Activated CD4-positive, alpha-beta memory T cell treated with anti-CD3 and anti-CD28 coated beads, Interleukin-2, amount 10 ng/mL, durations not matched to agents 7 days and 5 days (primary cell): ENCODE measurements at regions of chr7 and their contacts with region 1.

Region 1: DNA sequence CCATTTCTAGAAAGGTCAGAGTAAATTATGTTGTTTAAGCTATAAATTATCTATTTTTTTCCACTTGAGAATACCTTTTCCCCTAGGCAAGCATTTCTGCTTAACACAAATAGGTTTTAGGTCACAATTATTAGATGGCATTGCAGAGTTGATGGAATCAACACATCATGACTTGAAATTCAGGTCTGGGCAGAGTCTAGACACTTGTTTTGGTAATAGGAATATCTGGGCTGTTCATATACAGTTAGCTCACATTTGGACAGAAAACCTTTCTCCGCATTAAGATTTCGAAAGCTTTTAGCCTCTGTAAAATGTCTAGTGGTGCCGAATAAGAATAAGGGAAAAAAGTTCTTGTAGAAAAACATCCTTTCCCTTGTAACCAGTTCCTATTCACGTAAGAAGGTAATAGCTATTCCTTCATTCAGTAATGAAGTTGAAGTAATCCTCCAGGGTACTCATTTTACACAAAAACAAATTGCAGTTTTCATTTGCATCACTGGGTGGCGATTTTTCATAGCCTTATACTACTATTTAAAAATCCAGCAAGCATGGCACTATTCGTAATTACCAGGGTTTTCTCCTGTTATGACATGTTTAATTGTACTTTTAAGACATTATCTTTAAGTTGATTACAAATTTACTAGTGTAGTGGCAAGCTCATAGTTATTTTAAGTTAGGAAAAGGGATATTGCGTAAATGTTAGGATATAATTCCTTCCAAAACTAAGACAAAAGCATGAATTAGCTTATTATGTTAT is 37.0 kb downstream of the RPA3 start:
- DNase-seq: peak; percentile 26
- H3K4me3 Mint-ChIP-seq: no peak overlapping the region
- H3K27ac Mint-ChIP-seq: no peak overlapping the region
- H3K4me1 Mint-ChIP-seq: peaks cover 21% of the 10 kb centered on the region
- H3K27me3 Mint-ChIP-seq: no peaks in the 10 kb centered on the region

Region 2: GRCh38 chr7:7719236-7719635 is 37.9 kb after region 1 on chr7:
- CTCF ChIA-PET with region 1: interaction called, 10 read pairs
- POLR2A ChIA-PET with region 1: no interaction called
- DNase-seq: peak; percentile 44
- H3K4me3 Mint-ChIP-seq: no peak overlapping the region
- H3K27ac Mint-ChIP-seq: no peak overlapping the region
- H3K4me1 Mint-ChIP-seq: peaks cover 17% of the 10 kb centered on the region
- H3K27me3 Mint-ChIP-seq: no peaks in the 10 kb centered on the region

Region 3: GRCh38 chr7:8035647-8036518 is 354.5 kb after region 1 on chr7:
- CTCF ChIA-PET with region 1: interaction called, 22 read pairs
- POLR2A ChIA-PET with region 1: no interaction called
- DNase-seq: no peak
- H3K4me3 Mint-ChIP-seq: no peak overlapping the region
- H3K27ac Mint-ChIP-seq: no peak overlapping the region
- H3K4me1 Mint-ChIP-seq: peaks cover 19% of the 10 kb centered on the region
- H3K27me3 Mint-ChIP-seq: no peaks in the 10 kb centered on the region

Region 4: GRCh38 chr7:8217200-8218068 is 536.1 kb after region 1 on chr7:
- CTCF ChIA-PET with region 1: interaction called, 20 read pairs
- POLR2A ChIA-PET with region 1: interaction called, 5 read pairs
- DNase-seq: no peak
- H3K4me3 Mint-ChIP-seq: no peak overlapping the region
- H3K27ac Mint-ChIP-seq: no peak overlapping the region
- H3K4me1 Mint-ChIP-seq: peaks cover 6% of the 10 kb centered on the region
- H3K27me3 Mint-ChIP-seq: no peaks in the 10 kb centered on the region